Activated T-helper 1 cell treated with anti-CD3 and anti-CD28 coated beads, Interleukin-12 subunit alpha, Interleukin-12 subunit beta, Interleukin-2, Interleukin-4 antibody, amounts not matched to agents 30 ng/mL and 10 ng/mL and 1 ng/mL, durations not matched to agents 14 hours and 24 hours and 36 hours (primary cell): ENCODE measurements at regions of chr13 and their contacts with region 1.

Region 1: DNA sequence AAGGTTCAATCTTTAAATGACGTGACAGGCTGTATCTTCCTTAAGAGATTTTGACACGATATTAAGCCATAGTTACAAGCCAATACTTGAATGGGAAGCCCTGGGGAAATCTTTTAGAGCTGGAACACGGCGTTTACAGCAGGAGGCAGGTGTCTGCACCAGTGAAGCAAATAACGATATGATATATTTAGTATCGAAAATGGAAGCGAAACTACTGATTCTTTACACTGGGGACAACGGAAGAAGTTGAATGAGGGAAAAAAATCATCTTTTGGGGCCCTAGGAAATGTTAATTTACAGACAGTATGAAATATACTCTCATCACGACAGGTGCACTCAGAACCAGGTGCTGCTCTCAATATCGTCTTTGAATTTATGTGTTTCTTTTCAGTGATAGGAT is 793.9 kb upstream of the PCDH20 start:
- DNase-seq: no peak
- H3K4me3 Mint-ChIP-seq: no peak overlapping the region
- H3K27ac Mint-ChIP-seq: no peak overlapping the region
- H3K4me1 Mint-ChIP-seq: no peaks in the 10 kb centered on the region
- H3K27me3 Mint-ChIP-seq: no peaks in the 10 kb centered on the region

Region 2: DNA sequence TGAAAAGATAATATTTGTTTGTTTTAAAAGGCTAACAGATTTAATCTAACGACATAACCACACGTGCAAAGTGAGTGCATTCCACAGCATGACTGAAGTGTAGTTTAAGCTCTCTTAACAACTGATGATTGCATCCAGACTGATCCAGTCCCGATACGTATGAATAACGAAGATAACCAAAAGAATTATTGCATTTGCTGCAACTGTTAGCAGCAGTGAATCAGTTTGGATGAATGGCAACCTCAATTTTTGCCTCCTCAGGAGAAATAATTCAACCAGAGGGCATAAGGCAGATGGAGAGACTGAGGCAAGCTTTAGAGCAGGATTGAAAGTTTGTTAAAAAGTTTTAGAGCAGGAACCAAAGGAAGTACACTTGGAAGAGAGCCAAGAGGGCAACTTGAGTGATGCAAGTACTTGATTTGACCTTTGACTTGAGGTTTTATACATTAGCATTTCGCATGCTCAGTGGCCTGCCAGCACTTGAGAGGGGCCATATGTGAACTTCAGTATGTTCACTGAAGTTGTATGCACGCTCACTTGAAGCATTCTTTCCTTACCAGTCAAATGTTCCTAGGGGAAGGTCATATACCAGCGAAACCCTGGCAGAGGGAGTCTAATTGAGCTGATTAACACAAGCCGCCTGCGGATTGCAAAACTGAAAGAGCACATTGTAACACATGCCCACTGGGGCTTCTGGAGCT is 41.1 kb after region 1 on chr13:
- intact Hi-C with region 1: loop called (anchors 2 kb)
- DNase-seq: no peak
- H3K4me3 Mint-ChIP-seq: no peak overlapping the region
- H3K27ac Mint-ChIP-seq: no peak overlapping the region
- H3K4me1 Mint-ChIP-seq: no peaks in the 10 kb centered on the region
- H3K27me3 Mint-ChIP-seq: no peaks in the 10 kb centered on the region